ENCODE measurements at regions of chr12 and their contacts with region 1.

Region 1: DNA sequence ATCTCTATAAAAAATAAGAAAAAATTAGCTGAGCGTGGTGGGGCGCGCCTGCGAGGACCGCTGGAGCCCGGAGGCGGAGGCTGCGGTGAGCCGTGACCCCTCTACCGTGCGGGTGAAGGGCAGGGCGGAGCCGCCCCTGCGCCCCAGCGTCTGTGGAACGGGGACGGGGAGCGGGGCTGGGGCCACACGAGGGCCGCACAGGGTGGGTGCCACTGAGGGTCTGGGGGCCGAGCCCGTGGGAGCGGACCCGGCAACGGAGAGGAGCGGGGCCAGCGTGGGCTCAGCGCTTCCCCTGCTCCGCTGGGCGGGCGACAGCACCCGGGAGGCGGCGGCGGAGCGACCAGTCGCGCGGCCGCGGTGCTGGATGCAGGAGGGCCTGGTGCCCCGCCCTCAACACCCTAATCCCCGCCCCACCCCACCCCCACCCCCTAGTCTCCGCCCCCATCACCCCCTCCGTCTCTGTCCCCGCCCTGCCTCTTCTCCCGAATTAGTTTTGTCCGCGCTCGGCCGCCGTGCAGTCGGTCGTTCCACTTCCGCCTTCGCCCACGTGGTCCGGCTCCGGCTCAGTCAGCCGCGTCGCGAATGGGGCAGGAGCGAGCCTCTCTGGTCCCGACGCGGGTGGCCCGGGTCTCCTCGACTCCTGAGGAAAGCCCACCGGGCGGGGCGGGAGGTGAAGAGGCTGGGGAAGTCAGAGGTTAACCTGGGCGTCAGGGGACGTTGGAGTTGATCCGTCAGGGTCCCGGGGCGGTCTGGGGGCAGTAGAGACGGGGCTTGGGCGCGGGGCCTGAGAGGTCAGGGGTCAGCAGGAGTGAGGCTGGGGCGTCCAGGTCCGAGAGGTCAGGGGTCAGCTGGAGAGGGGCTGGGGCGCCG is at the start of gene PUS1:
- DNase-seq: peak; percentile 79 to 93
- H3K4me3 ChIP-seq: peak within 1 kb of the TSS; percentile 50 to 85 (median 74)
- H3K27ac ChIP-seq: peak within 1 kb of the TSS; percentile 16; the same call in 1 of the 2 replicates
- H3K4me1 ChIP-seq: peaks cover 0 to 7% (median 2%) of the 10 kb centered on the region in 4 experiments; a peak in 2 of 7 replicates
- H3K27me3 ChIP-seq: no peaks in the 10 kb centered on the region
- CTCF ChIP-seq: no peak
- EP300 ChIP-seq: no peak
- POLR2A ChIP-seq: peak in 1 of 2 experiments; percentile 89; a peak in 2 of 3 replicates
- RAD21 ChIP-seq: no peak
- total RNA-seq, gene PUS1: 81.2 and 82.5 TPM in 2 replicates

Region 2: DNA sequence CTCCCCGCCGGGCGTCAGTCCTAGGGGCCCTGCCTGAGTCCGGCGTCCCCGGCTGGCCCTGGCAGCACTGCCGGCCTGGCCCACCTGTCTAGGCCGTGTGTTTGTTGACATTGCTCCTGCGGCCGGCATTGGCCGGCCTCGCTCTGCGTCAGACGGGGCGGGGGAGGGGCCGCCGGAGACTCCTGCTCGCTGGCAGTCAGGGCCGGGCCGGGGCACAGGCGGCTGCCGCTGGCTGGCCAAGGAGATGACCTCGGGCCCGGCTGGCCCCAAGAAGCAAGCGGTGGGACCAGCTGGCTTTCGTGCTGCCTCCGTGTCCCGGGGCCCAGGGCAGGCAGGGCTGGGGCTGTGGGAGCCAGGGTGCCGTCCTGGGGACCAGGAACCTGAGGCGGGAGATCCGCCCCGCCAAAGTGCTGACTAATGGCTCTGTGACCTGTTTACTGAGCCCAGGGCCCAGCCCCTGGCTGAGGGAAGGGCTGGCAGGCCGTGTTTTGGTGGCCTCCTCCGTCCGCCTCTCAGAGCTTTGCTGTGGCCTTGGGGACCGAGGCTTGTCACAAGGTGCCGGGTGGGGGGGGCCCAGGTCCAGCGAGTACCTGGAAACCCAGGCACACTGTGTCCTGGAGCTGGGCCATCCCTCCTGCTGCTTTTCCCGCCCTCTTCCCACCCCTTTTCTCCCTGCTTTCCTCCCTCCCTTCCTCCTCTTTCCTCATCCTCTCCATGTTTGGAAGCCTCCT is 32.7 kb before region 1 on chr12:
- CTCF ChIA-PET with region 1: no interaction called
- POLR2A ChIA-PET with region 1: interaction called, 10 read pairs
- DNase-seq: peak; percentile 53 to 90
- H3K4me3 ChIP-seq: peak overlapping the region; percentile 38 to 75 (median 62)
- H3K27ac ChIP-seq: peak overlapping the region; percentile 70; the same call in 1 of the 2 replicates
- H3K4me1 ChIP-seq: peaks cover 0 to 16% (median 14%) of the 10 kb centered on the region in 4 experiments; a peak in 6 of 7 replicates
- H3K27me3 ChIP-seq: no peaks in the 10 kb centered on the region
- CTCF ChIP-seq: no peak
- EP300 ChIP-seq: peak; percentile 3 to 65; a peak in 2 of 3 replicates
- POLR2A ChIP-seq: peak in 1 of 2 experiments; percentile 77; a peak in 2 of 3 replicates
- RAD21 ChIP-seq: no peak

Region 3: DNA sequence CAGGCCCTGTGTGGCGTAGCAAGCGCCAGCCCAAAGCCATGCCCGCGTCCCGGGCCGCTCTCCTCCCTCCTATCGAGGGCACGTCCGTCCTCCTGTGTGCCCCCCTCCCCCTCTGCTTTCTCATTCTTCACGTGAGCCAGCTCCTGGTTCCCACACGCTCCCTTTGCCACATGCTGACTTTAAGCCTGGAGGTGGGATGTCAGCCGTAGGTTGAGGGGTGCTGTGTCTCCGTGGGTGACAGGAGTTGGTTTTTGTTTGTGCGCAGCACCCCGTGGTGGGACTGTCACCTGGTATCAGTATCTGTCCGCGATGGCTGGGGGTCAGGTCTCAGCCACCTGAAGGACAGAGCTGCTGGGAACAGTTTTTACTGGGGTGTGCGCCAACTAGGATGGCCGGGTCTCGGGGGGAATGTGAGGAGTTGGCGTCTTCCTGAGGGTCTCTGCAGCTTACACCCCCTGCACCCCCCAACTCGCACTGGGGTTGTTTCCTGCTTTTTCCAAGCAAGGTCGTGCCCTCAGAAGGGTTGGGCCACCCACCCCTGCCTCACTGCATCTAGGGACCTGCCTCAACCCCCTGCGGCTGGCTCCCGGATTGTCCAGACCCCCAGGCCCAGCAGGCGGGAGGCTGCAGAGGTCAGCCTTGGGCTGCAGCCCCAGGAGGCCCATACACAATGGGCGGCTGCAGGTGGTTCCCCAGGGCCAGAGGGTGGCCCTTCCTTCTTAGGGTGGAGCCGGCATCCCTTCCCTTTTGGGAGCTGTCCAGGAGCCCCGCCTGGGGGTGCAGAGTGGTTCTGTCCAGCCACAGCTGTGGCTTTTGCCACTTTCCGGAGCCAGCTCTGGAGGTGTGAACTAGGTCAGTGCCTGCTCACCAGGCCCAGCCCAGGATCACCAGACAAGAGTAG is 27.3 kb before region 1 on chr12:
- CTCF ChIA-PET with region 1: no interaction called
- POLR2A ChIA-PET with region 1: interaction called, 10 read pairs
- DNase-seq: no peak
- H3K4me3 ChIP-seq: no peak overlapping the region
- H3K27ac ChIP-seq: no peak overlapping the region
- H3K4me1 ChIP-seq: peaks cover 0 to 4% (median 3%) of the 10 kb centered on the region in 4 experiments; a peak in 5 of 7 replicates
- H3K27me3 ChIP-seq: no peaks in the 10 kb centered on the region
- CTCF ChIP-seq: no peak
- EP300 ChIP-seq: no peak
- POLR2A ChIP-seq: no peak
- RAD21 ChIP-seq: no peak

Region 4: DNA sequence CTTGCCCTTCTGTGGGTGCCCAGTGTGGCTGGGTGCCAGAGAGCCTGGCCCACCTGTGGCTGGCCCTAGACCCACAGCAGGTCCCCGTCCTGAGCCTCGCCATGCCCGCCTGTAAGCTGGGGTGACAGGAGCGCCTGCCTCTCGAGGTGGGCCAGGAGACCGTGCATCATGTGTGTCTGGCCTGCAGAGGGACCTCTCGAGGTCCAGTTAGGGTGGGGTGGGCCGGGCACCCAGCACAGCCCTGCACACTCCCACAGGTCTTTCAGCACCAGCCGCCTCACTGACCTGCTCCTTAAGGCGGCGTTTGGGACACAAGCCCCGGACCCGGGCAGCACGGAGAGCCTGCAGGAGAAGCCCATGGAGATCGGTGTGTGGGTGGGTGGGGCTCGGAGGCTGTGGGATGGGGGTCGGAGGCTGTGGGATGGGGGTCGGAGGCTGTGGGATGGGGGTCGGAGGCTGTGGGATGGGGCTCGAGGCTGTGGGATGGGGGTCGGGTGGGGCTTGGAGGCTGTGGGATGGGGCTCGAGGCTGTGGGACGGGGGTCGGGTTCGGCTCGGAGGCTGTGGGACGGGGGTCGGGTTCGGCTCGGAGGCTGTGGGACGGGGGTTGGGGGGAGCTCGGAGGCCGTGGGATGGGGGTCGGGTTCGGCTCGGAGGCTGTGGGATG is 12.1 kb before region 1 on chr12:
- CTCF ChIA-PET with region 1: interaction called, 6 read pairs
- POLR2A ChIA-PET with region 1: interaction called, 33 read pairs
- DNase-seq: no peak
- H3K4me3 ChIP-seq: no peak overlapping the region
- H3K27ac ChIP-seq: no peak overlapping the region
- H3K4me1 ChIP-seq: no peaks in the 10 kb centered on the region
- H3K27me3 ChIP-seq: no peaks in the 10 kb centered on the region
- CTCF ChIP-seq: peak in 1 of 3 experiments; percentile 28; a peak in 1 of 4 replicates
- EP300 ChIP-seq: no peak
- POLR2A ChIP-seq: no peak
- RAD21 ChIP-seq: no peak; a peak in 1 of 4 replicates

Region 5: DNA sequence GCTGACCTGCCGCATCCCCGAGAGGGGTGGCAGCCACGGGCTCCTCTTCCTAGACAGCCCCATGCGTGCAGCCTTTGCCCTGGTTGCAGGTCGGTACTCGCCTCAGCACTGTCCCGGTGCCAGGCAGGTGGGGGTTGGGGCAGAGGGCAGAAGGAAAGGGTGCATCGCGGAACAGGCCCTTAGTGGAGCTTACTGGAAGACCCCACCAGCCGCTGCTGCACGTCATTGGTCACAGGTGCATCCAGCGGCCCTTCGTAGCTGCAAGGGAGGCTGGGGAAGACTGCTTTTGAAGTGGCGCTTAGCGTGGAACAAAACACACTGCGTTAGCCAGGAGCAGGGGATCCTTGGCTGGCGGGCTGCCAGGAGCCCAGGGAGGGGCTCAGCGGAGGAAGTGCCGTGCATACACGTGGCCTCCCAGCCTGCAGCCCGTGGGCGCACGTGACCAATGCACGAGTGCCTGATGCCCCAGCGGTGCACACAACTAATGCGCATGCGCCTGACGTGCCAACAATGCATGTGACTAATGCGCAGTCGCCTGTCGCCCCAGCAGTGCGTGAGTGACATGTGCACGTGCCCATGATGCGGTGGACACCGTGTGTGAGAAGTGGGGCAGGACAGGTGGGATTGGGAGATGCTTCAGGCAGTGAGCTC is 15.8 kb after region 1 on chr12:
- CTCF ChIA-PET with region 1: interaction called, 3 read pairs
- POLR2A ChIA-PET with region 1: interaction called, 44 read pairs
- DNase-seq: no peak
- H3K4me3 ChIP-seq: no peak overlapping the region
- H3K27ac ChIP-seq: no peak overlapping the region
- H3K4me1 ChIP-seq: peaks cover 0 to 3% (median 1%) of the 10 kb centered on the region in 4 experiments; a peak in 4 of 7 replicates
- H3K27me3 ChIP-seq: no peaks in the 10 kb centered on the region
- CTCF ChIP-seq: no peak
- EP300 ChIP-seq: no peak
- POLR2A ChIP-seq: no peak
- RAD21 ChIP-seq: no peak

Region 6: GRCh38 chr12:131963381-131963780 is 34.4 kb after region 1 on chr12:
- CTCF ChIA-PET with region 1: no interaction called
- POLR2A ChIA-PET with region 1: no interaction called
- DNase-seq: no peak
- H3K4me3 ChIP-seq: no peak overlapping the region
- H3K27ac ChIP-seq: no peak overlapping the region
- H3K4me1 ChIP-seq: no peaks in the 10 kb centered on the region
- H3K27me3 ChIP-seq: no peaks in the 10 kb centered on the region
- CTCF ChIP-seq: no peak
- EP300 ChIP-seq: no peak
- POLR2A ChIP-seq: no peak
- RAD21 ChIP-seq: no peak